ENCODE measurements at regions of chr5 and their contacts with region 1.

Region 1: DNA sequence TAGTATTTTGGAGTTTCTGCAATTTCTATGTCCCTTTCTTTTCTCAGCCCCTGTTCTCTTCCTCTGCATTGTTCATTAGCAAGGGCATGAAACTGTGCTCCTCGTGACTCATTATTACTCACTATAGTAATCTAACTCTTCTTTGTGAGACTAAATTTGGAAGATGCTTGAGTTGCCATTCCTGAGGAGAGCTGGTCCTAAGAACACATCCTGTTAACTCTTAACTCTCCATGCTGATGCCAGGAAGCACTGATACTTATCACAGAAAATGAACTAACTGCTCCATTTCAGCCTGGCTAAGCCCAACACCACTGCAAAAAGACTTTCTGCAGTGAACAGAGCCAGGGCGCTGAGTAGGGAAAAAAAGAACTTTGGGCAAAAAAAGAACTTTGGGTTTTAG is 10.6 kb upstream of the CSNK1A1 start:
- DNase-seq: no peak
- ATAC-seq: no peak
- H3K4me3 ChIP-seq: no peak overlapping the region
- H3K4me3 Mint-ChIP-seq: no peak overlapping the region
- H3K27ac ChIP-seq: no peak overlapping the region
- H3K27ac Mint-ChIP-seq: no peak overlapping the region
- H3K4me1 ChIP-seq: no peaks in the 10 kb centered on the region
- H3K4me1 Mint-ChIP-seq: no peaks in the 10 kb centered on the region
- H3K27me3 ChIP-seq: no peaks in the 10 kb centered on the region
- H3K27me3 Mint-ChIP-seq: no peaks in the 10 kb centered on the region
- CTCF ChIP-seq: no peak

Region 2: GRCh38 chr5:149317281-149318048 is 244.4 kb before region 1 on chr5:
- CTCF ChIA-PET with region 1: interaction called, 28 read pairs
- POLR2A ChIA-PET with region 1: no interaction called
- intact Hi-C with region 1: no loop called
- DNase-seq: peak; percentile 57
- ATAC-seq: peak; percentile 36
- H3K4me3 ChIP-seq: no peak overlapping the region
- H3K4me3 Mint-ChIP-seq: no peak overlapping the region
- H3K27ac ChIP-seq: no peak overlapping the region
- H3K27ac Mint-ChIP-seq: no peak overlapping the region
- H3K4me1 ChIP-seq: no peaks in the 10 kb centered on the region
- H3K4me1 Mint-ChIP-seq: no peaks in the 10 kb centered on the region
- H3K27me3 ChIP-seq: no peaks in the 10 kb centered on the region
- H3K27me3 Mint-ChIP-seq: no peaks in the 10 kb centered on the region
- CTCF ChIP-seq: peak; percentile 78

Region 3: GRCh38 chr5:149381987-149382340 is 179.9 kb before region 1 on chr5:
- CTCF ChIA-PET with region 1: interaction called, 67 read pairs
- POLR2A ChIA-PET with region 1: no interaction called
- intact Hi-C with region 1: no loop called
- DNase-seq: peak; percentile 68
- ATAC-seq: peak; percentile 73
- H3K4me3 ChIP-seq: no peak overlapping the region
- H3K4me3 Mint-ChIP-seq: no peak overlapping the region
- H3K27ac ChIP-seq: no peak overlapping the region
- H3K27ac Mint-ChIP-seq: no peak overlapping the region
- H3K4me1 ChIP-seq: peaks cover 0 to 5% of the 10 kb centered on the region in 2 donors
- H3K4me1 Mint-ChIP-seq: peaks cover 2% of the 10 kb centered on the region
- H3K27me3 ChIP-seq: no peaks in the 10 kb centered on the region
- H3K27me3 Mint-ChIP-seq: no peaks in the 10 kb centered on the region
- CTCF ChIP-seq: peak; percentile 83

Region 4: DNA sequence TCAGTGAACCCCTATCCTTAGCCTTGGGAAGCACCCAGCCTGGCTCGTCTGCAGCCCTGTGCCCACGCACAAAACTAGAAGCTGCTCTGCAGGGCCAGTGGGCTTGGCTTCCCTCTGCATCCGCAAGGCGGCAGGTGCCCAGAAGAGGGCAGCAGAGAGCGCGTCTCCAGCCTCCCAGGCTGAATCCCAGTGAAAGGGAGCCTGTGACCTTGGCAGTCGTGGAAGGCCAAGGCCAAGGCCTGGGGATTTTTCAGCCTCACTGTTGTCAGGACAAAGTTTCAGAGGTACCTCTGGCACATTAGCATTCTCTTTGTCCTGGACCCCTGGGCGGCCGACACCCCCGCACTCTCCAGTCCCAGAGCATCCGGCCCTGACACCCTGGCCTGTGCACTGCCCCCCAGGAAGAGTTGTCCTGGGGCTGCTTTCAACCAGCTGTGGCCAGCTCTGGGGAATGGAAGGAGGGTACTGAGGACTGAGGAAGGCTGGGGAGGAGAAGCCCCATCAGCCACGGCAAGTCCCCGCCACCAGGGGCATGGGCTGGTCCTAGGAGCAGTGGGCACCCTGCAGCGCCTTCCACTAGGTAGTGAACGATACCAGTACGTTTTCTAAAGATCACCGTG is 119.2 kb before region 1 on chr5:
- CTCF ChIA-PET with region 1: interaction called, 17 read pairs
- POLR2A ChIA-PET with region 1: no interaction called
- intact Hi-C with region 1: no loop called
- DNase-seq: peak; percentile 61
- ATAC-seq: peak; percentile 67
- H3K4me3 ChIP-seq: no peak overlapping the region
- H3K4me3 Mint-ChIP-seq: no peak overlapping the region
- H3K27ac ChIP-seq: no peak overlapping the region
- H3K27ac Mint-ChIP-seq: no peak overlapping the region
- H3K4me1 ChIP-seq: no peaks in the 10 kb centered on the region
- H3K4me1 Mint-ChIP-seq: no peaks in the 10 kb centered on the region
- H3K27me3 ChIP-seq: peaks cover 0 to 8% (median 0%) of the 10 kb centered on the region in 4 experiments
- H3K27me3 Mint-ChIP-seq: peaks cover 13% of the 10 kb centered on the region
- CTCF ChIP-seq: peak; percentile 83

Region 5: GRCh38 chr5:150227606-150228273 is 665.9 kb after region 1 on chr5:
- CTCF ChIA-PET with region 1: no interaction called
- POLR2A ChIA-PET with region 1: no interaction called
- intact Hi-C with region 1: no loop called
- DNase-seq: no peak
- ATAC-seq: no peak
- H3K4me3 ChIP-seq: no peak overlapping the region
- H3K4me3 Mint-ChIP-seq: no peak overlapping the region
- H3K27ac ChIP-seq: no peak overlapping the region
- H3K27ac Mint-ChIP-seq: no peak overlapping the region
- H3K4me1 ChIP-seq: no peaks in the 10 kb centered on the region
- H3K4me1 Mint-ChIP-seq: no peaks in the 10 kb centered on the region
- H3K27me3 ChIP-seq: no peaks in the 10 kb centered on the region
- H3K27me3 Mint-ChIP-seq: no peaks in the 10 kb centered on the region
- CTCF ChIP-seq: no peak